Activated naive CD4-positive, alpha-beta T cell treated with anti-CD3 and anti-CD28 coated beads for 36 hours (primary cell): ENCODE measurements at regions of chr2 and their contacts with region 1.

Region 1: GRCh38 chr2:73163483-73164367 is 38.6 kb upstream of the NOTO start:
- DNase-seq: peak; percentile 82
- H3K4me3 Mint-ChIP-seq: no peak overlapping the region
- H3K27ac Mint-ChIP-seq: no peak overlapping the region
- H3K4me1 Mint-ChIP-seq: no peaks in the 10 kb centered on the region
- H3K27me3 Mint-ChIP-seq: peaks cover 2% of the 10 kb centered on the region

Region 2: GRCh38 chr2:72893594-72894319 is 270.0 kb before region 1 on chr2:
- CTCF ChIA-PET with region 1: no interaction called
- intact Hi-C with region 1: loop called (anchors 1 kb)
- DNase-seq: peak; percentile 75
- H3K4me3 Mint-ChIP-seq: no peak overlapping the region
- H3K27ac Mint-ChIP-seq: no peak overlapping the region
- H3K4me1 Mint-ChIP-seq: peaks cover 2% of the 10 kb centered on the region
- H3K27me3 Mint-ChIP-seq: peaks cover 45% of the 10 kb centered on the region

Region 3: DNA sequence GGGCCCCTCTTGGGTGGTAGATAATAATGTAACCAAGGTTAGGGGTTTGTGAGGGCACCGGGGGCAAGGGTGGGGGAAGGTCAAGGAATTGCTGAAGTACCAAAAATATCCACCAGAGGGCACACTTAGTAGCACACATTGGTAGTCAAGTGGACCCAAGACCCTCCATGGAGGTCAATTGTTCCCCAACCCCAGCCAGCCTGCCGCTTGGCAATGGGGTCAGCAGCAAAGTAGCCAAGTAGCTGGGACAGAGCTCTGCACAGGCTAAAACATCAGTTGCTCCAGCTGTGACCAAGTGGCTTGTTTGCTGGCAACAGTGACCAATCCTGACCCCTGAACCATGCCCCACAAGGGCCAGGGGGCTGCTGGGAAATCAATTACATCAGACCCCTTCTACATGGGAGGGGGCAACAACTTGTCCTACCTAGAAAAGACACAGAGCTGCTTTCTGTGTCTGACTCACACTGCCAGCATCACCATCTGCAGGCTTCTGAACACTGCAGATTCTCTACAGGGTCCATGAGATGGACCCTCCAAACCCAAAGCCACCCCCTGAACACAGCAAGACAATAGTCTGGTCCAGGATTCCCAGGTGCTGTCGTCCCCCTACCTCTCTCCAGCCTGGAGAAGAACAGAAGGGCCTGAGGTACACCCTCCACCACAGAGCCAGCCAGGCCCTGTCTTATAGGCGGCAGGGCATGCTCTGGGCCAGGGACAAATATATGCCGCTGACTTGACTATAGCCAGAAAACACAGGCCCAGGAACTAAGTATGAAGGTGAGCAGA is 170.4 kb before region 1 on chr2:
- CTCF ChIA-PET with region 1: interaction called, 12 read pairs
- intact Hi-C with region 1: loop called (anchors 1 kb)
- DNase-seq: peak; percentile 42
- H3K4me3 Mint-ChIP-seq: no peak overlapping the region
- H3K27ac Mint-ChIP-seq: no peak overlapping the region
- H3K4me1 Mint-ChIP-seq: no peaks in the 10 kb centered on the region
- H3K27me3 Mint-ChIP-seq: no peaks in the 10 kb centered on the region